ENCODE measurements at regions of chr1 and their contacts with region 1.

Region 1: GRCh38 chr1:176073524-176074157 is 133.4 kb downstream of the COP1 start:
- DNase-seq: no peak
- H3K4me3 Mint-ChIP-seq: no peak overlapping the region
- H3K27ac Mint-ChIP-seq: no peak overlapping the region
- H3K4me1 Mint-ChIP-seq: peaks cover under 1% of the 10 kb centered on the region
- H3K27me3 Mint-ChIP-seq: no peaks in the 10 kb centered on the region

Region 2: GRCh38 chr1:175373786-175374623 is 699.6 kb before region 1 on chr1:
- intact Hi-C with region 1: loop called (anchors 10 kb)
- DNase-seq: no peak
- H3K4me3 Mint-ChIP-seq: no peak overlapping the region
- H3K27ac Mint-ChIP-seq: no peak overlapping the region
- H3K4me1 Mint-ChIP-seq: no peaks in the 10 kb centered on the region
- H3K27me3 Mint-ChIP-seq: peaks cover 10% of the 10 kb centered on the region

Region 3: GRCh38 chr1:175824079-175824478 is 249.6 kb before region 1 on chr1:
- intact Hi-C with region 1: no loop called
- DNase-seq: no peak
- H3K4me3 Mint-ChIP-seq: no peak overlapping the region
- H3K27ac Mint-ChIP-seq: no peak overlapping the region
- H3K4me1 Mint-ChIP-seq: no peaks in the 10 kb centered on the region
- H3K27me3 Mint-ChIP-seq: peaks cover 9% of the 10 kb centered on the region

Region 4: DNA sequence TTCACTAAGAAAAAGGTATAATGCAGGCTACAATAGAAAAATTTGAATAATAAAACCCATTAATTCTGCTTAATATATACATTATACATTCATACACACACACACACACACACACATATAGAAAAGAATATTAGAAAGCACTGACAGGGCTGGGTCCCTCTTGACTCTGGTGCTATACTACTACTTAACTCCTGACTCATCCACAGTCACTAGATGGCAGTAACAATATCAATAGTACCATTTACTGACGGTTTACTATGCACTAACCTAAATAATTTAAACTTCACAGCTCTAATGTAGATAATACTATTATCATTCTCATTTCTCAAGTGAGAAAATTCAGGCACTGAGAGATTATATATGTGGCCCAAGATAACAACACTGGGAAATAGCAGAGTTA is 45.9 kb after region 1 on chr1:
- intact Hi-C with region 1: no loop called
- DNase-seq: no peak
- H3K4me3 Mint-ChIP-seq: no peak overlapping the region
- H3K27ac Mint-ChIP-seq: no peak overlapping the region
- H3K4me1 Mint-ChIP-seq: no peaks in the 10 kb centered on the region
- H3K27me3 Mint-ChIP-seq: no peaks in the 10 kb centered on the region

Measured in activated T-helper 2 cell treated with anti-CD3 and anti-CD28 coated beads, Interferon-gamma antibody, Interleukin-2, Interleukin-4, amounts not matched to agents 10 μg/mL and 5 μg/mL and 100 μg/mL, durations not matched to agents 14 hours and 24 hours and 36 hours (primary cell).